ENCODE measurements at regions of chr18 and their contacts with region 1.

Region 1: GRCh38 chr18:34787931-34788532 is 77.9 kb downstream of the DTNA start:
- DNase-seq: peak in 24 of 42 donors; percentile 8 to 84 (median 60)

Region 2: DNA sequence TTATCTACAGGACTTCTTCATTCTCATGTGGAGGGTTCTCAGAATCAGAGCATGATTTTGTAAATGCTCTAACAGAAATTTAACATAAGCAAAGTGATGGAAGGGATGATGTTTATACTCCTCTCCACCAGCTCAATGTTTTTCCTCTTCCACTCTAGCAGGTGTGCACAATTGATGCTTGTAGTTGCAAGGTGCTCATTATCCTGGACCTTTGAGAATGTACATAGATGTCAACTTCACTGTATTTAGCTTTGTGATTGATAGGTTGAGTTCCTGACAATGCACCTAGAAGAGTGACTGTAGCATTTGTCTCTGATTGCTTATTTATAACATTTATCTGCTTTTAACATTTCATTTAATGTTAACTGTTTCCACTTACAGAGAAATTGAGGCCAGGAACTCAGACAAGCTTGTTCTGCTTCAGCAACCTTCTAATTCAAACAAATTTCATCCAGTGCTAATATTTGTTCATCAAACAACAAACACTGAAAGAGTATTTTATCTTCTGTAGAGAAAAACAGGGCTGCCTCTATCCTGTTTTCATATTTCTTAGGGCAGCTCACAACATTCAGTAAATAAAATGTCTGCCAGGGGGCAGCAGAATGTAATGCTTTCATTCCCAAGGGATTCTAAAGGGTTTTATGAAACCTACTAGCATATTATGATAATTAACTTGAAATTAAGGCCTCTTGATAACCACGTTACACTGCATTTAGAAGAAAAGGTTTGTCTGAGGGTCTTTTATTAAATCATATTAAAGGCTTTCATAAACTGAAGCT is 435.5 kb before region 1 on chr18:
- intact Hi-C with region 1: loop called (anchors 10 kb)
- DNase-seq: peak in 4 of 42 donors; percentile 2 to 29 (median 10)

Region 3: GRCh38 chr18:34659579-34660517 is 128.2 kb before region 1 on chr18:
- intact Hi-C with region 1: loop called (anchors 10 kb)
- DNase-seq: peak; percentile 39 to 93 (median 72)

Region 4: DNA sequence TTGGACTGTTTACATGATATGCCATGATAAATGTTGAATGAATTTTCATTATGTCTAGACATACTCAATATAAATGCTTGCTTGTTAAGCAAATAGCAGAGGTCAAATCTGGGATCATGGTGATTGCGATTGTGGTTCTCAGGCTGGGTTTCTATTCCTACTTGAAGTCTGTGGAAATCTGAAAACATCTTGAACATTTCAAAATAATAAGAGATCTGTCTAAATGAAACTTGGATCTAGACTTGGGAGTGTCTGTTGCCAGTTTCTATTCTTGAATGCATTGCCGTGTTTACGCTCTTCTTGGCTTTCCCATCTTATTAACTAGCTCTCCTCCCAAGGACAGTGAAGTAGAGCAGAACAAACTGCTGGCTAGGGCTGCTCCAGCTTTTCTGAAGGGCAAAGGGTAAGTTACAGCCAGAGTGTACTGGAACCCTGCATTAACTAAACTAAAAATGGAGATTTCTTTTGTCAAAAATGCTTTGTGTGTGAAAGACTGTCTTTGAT is 49.8 kb after region 1 on chr18:
- intact Hi-C with region 1: no loop called
- DNase-seq: peak in 2 of 42 donors; percentile 17 to 34

Region 5: GRCh38 chr18:34848695-34849094 is 60.7 kb after region 1 on chr18:
- intact Hi-C with region 1: no loop called
- DNase-seq: no peak

Measured in head of caudate nucleus (tissue), 42 donors.